ENCODE measurements at regions of chr9 and their contacts with region 1.

Region 1: GRCh38 chr9:69190086-69190862 is 16.2 kb downstream of the TJP2 start:
- DNase-seq: no peak
- ATAC-seq: no peak
- H3K4me3 ChIP-seq: no peak overlapping the region
- H3K27ac ChIP-seq: peak overlapping the region in 5 of 12 donors; percentile 9 to 53 (median 29)
- H3K4me1 ChIP-seq: peaks cover 15 to 90% (median 58%) of the 10 kb centered on the region in 12 donors
- H3K27me3 ChIP-seq: no peaks in the 10 kb centered on the region
- CTCF ChIP-seq: no peak
- POLR2A ChIP-seq: no peak

Region 2: GRCh38 chr9:69035438-69036308 is 154.6 kb before region 1 on chr9 and contains the start of gene FXN:
- intact Hi-C with region 1: loop called in 2 of 10 experiments (anchors 5 kb)
- DNase-seq: peak; percentile 82 to 93 (median 87)
- ATAC-seq: peak; percentile 81 to 97 (median 94)
- H3K4me3 ChIP-seq: peak within 1 kb of the TSS; percentile 46 to 94 (median 78)
- H3K27ac ChIP-seq: peak within 1 kb of the TSS; percentile 28 to 95 (median 87)
- H3K4me1 ChIP-seq: peaks cover 0 to 14% (median 7%) of the 10 kb centered on the region in 12 donors
- H3K27me3 ChIP-seq: no peaks in the 10 kb centered on the region
- CTCF ChIP-seq: peak; percentile 97 to 100 (median 99)
- POLR2A ChIP-seq: peak in 1 of 2 donors; percentile 56
- total RNA-seq, gene FXN: 16.9 to 40.2 (median 30.0) TPM

Region 3: GRCh38 chr9:69121828-69122548 is 68.3 kb before region 1 on chr9:
- intact Hi-C with region 1: loop called in 7 of 10 experiments (anchors 1 to 5 kb)
- DNase-seq: peak; percentile 70 to 84 (median 78)
- ATAC-seq: peak; percentile 82 to 89 (median 84)
- H3K4me3 ChIP-seq: peak overlapping the region; percentile 63 to 87 (median 81)
- H3K27ac ChIP-seq: peak overlapping the region; percentile 70 to 96 (median 90)
- H3K4me1 ChIP-seq: peaks cover 0 to 17% (median 9%) of the 10 kb centered on the region in 12 donors
- H3K27me3 ChIP-seq: no peaks in the 10 kb centered on the region
- CTCF ChIP-seq: peak in 3 of 12 donors; percentile 1 to 32 (median 21)
- POLR2A ChIP-seq: no peak

Region 4: DNA sequence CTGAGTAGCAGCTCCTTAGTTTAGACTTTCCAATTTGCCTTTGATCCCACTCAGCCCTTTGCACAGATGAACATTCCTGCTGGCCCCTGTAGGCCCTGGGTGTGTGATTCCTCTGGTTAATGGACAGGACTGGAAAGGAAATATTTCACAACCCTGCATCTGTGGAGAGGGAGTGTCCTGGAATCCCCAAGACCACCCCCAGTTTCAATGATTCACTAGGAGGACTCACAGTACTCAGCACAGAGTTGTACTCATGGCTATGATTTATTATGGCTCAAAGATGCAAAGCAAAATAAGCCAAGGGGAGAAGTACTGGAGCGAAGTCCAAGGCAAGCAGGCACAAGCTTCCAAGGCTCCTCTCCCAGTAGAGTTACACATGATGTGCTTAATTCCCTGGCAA is 58.6 kb before region 1 on chr9:
- intact Hi-C with region 1: loop called in 1 of 10 experiments (anchors 5 kb)
- DNase-seq: no peak
- ATAC-seq: peak; percentile 31 to 72 (median 48)
- H3K4me3 ChIP-seq: no peak overlapping the region
- H3K27ac ChIP-seq: peak overlapping the region in 10 of 12 donors; percentile 55 to 85 (median 72)
- H3K4me1 ChIP-seq: peaks cover 3 to 71% (median 29%) of the 10 kb centered on the region in 12 donors
- H3K27me3 ChIP-seq: no peaks in the 10 kb centered on the region
- CTCF ChIP-seq: no peak
- POLR2A ChIP-seq: no peak

Region 5: GRCh38 chr9:69149321-69149807 is 40.9 kb before region 1 on chr9:
- intact Hi-C with region 1: loop called in 1 of 10 experiments (anchors 5 kb)
- DNase-seq: peak in 2 of 5 donors; percentile 18 to 29
- ATAC-seq: peak in 3 of 4 donors; percentile 37 to 66 (median 66)
- H3K4me3 ChIP-seq: peak overlapping the region in 1 of 12 donors; percentile 10
- H3K27ac ChIP-seq: peak overlapping the region in 10 of 12 donors; percentile 24 to 76 (median 50)
- H3K4me1 ChIP-seq: peaks cover 0 to 29% (median 9%) of the 10 kb centered on the region in 12 donors
- H3K27me3 ChIP-seq: no peaks in the 10 kb centered on the region
- CTCF ChIP-seq: peak in 9 of 12 donors; percentile 17 to 55 (median 38)
- POLR2A ChIP-seq: no peak

Measured in heart left ventricle (tissue), 16 donors.